Gastrocnemius medialis (tissue), 4 donors: ENCODE measurements at regions of chr10 and their contacts with region 1.

Region 1: DNA sequence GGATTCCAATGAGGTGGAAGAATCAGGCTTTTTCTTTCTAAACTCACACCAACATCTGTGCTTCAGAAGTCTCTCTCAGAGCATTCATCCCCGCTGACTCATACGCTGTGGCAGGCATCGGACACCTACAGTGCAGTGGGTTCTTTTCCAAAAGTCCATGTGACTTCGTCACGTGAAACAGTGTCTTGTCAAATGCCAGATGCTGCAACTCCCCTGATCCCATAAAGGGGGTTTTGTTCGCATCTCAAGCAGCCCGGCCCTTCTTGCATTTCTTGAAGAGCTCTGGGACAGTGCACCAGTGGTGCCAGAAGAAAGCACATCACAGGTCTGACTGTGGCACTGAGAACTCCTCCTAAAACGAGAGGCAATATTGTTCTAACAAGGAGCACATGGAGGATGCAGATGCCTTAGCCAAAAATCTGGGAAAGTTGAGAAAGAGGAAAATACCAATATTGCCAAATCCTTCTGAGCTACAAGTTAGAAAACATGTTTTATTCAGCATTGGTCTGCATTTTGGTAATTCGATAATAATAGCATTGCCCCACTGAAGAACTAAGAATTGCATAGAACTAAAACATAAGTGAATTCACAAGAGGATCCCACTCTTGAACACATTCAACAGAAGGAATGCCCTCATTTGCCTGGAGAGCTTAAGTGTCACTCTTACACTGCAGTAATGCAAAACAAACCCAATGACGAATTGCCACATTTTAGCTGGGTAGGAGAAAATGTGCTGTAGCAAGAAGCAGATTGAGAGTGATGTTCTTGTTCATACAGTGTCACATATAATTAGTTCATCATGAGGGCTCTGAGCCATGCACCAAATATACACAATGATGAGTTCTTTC is 204.4 kb downstream of the CXCL12 start:
- DNase-seq: peak; percentile 44 to 73
- ATAC-seq: peak; percentile 75 to 80
- H3K4me3 ChIP-seq: no peak overlapping the region
- H3K27ac ChIP-seq: peak overlapping the region; percentile 16 to 41 (median 28)
- H3K4me1 ChIP-seq: no peaks in the 10 kb centered on the region
- H3K27me3 ChIP-seq: no peaks in the 10 kb centered on the region
- CTCF ChIP-seq: no peak
- POLR2A ChIP-seq: no peak

Region 2: DNA sequence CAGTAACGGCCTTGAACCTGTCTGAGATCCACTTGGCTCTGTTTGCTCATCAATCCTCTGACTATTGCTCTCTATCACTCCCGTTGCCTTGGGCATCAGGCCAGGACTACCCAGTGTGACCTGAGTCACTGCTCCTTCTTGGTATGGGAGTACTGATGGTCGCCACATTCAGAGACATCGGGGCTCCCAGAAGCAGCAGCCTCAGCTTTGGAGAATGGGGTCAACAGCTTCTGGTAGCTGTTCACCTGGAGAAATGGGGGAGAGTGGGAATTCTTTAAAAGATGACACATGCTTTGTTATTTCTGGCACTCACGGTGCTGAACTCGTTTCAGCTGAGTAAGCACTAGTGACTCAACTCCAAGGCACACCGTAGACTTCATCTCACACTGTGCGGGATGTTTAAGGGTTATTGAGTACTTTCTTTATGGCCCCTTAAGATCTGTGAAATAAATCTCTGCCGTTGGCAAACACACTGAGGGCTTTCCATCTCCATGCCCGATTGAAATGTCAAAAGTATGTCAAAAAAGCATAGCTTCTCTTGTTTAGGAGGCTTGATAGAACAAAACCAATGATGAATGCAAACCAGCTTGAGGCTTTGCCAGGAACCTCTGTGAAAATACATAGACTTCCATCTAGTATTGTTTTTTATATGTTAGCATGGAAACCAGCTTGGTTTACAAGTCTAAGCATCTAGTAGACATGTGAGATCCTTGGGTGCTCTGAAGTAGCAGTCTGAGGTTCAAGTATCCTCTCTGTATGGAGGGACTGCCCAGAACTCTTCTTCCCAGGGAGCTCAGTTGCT is 128.8 kb before region 1 on chr10:
- in situ Hi-C with region 1: no loop called
- intact Hi-C with region 1: no loop called
- DNase-seq: no peak
- ATAC-seq: no peak
- H3K4me3 ChIP-seq: no peak overlapping the region
- H3K27ac ChIP-seq: no peak overlapping the region
- H3K4me1 ChIP-seq: no peaks in the 10 kb centered on the region
- H3K27me3 ChIP-seq: no peaks in the 10 kb centered on the region
- CTCF ChIP-seq: no peak
- POLR2A ChIP-seq: no peak

Region 3: DNA sequence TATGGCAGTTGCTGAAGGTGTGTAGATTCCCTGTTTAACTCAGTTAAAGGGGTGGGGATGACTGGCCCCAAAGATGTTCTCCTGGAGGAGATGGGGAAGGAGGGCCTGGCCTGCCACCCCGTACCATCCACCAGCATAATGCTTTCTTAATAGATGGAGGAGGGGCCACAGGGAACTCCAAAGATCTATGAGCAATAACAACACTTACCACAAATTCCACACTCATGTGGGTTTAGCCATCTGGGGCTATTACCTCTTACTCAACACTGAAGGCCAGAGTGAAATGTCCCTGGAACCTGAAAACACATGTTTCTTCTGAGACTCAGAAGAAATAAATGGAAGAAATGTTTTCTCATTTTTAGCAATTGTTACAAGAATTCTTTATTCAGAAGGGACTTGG is 54.7 kb before region 1 on chr10:
- in situ Hi-C with region 1: no loop called
- intact Hi-C with region 1: loop called (anchors 10 kb)
- DNase-seq: peak in 1 of 2 donors; percentile 19
- ATAC-seq: peak; percentile 72 to 80
- H3K4me3 ChIP-seq: no peak overlapping the region
- H3K27ac ChIP-seq: peak overlapping the region; percentile 10 to 51 (median 35)
- H3K4me1 ChIP-seq: no peaks in the 10 kb centered on the region
- H3K27me3 ChIP-seq: no peaks in the 10 kb centered on the region
- CTCF ChIP-seq: no peak
- POLR2A ChIP-seq: no peak